Activated CD4-positive, alpha-beta memory T cell treated with anti-CD3 and anti-CD28 coated beads for 36 hours (primary cell): ENCODE measurements at regions of chr3 and their contacts with region 1.

Region 1: DNA sequence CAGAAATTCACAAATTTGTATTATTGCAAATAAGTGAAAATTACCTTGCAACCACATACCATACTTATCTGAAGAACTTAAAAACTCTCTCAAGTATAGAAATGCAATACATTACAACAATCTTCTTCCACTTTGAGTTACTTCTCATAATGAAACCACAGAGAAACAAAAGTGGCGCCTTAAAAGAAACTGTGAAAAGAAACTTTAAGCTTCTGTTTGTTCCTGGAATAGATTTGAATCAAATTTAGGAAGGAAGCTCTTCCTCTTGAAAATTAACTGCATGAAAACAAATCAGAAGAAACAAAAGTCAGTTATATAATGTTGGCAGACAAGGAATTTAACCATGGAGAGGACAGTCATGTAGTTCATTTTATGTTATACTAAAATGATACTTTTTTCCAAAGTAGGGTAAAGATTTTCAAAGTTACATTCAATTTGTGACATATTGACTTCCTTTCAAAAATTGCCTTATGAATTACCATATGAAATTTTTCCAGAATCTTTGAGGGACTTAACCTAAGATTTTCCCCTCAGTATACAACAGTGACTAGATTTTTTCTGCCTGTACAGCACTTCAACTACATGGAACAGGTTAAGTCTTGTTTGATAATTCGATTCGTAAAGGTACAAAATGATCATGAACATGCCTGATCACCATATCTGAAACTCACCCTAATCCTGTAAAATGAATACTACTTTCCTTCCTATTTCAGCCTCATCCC is 57.6 kb upstream of the TNFSF10 start:
- DNase-seq: no peak
- H3K4me3 Mint-ChIP-seq: peak overlapping the region; percentile 18
- H3K27ac Mint-ChIP-seq: peak overlapping the region; percentile 68
- H3K4me1 Mint-ChIP-seq: peaks cover 78% of the 10 kb centered on the region
- H3K27me3 Mint-ChIP-seq: peaks cover 2% of the 10 kb centered on the region

Region 2: GRCh38 chr3:172530566-172530965 is 50.3 kb before region 1 on chr3:
- CTCF ChIA-PET with region 1: interaction called, 9 read pairs
- POLR2A ChIA-PET with region 1: interaction called, 7 read pairs
- intact Hi-C with region 1: loop called (anchors 1 kb)
- DNase-seq: peak; percentile 42
- H3K4me3 Mint-ChIP-seq: peak overlapping the region; percentile 23
- H3K27ac Mint-ChIP-seq: peak overlapping the region; percentile 86
- H3K4me1 Mint-ChIP-seq: peaks cover 24% of the 10 kb centered on the region
- H3K27me3 Mint-ChIP-seq: no peaks in the 10 kb centered on the region